GM13976 (cell line): ENCODE measurements at regions of chr12 and their contacts with region 1.

Region 1: DNA sequence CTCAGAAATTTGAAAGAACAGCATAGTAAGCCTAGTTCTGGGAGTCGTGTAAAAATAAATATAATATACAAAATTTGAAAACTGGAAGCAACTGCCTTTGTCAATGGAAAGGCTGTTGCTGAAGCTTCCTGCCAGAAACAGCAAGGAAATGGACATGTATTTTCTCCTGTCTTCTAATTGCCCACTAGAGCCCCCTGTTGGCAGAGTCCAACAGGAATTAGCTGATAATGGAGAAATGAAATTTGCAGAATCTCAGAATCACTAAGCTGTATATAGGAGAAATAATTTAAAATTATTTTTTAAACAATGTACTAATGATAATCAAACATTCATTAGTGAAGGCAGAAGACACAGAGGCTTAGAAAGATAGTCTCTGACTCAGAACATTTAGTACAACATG is 414.8 kb downstream of the SLC6A15 start:
- DNase-seq: no peak
- CTCF ChIP-seq: peak; percentile 24

Region 2: DNA sequence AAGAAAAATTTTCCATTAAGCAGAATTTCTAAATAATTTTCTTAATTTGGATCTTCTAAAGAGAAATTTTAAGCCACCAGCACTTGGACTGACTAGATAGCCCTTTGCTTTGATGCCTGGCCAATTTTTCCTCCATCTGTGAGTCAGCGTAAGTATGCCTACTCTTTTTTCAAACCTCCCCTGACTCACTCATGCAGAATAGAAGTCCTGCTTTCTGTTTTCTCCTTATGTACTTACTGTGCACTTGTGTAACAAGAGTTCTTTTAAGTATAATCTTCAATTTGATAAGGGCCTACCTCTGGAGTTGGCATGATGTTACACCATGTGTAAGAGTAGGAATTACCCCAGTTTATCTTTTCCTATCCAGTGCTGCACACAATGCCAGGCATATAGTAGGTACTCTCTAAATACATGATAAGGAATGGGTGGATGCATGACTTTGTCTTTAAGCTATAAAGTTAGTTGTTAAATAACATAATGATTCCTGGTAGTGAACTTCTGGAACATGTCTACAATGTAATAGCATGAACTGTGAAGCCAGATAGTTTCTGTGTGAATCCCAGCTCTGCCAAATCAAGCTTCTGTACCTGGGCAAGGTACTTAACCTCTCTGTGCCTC is 1481.5 kb before region 1 on chr12:
- in situ Hi-C with region 1: loop called (anchors 25 kb)
- DNase-seq: no peak
- CTCF ChIP-seq: no peak

Region 3: GRCh38 chr12:84305144-84305543 is 192.7 kb before region 1 on chr12:
- in situ Hi-C with region 1: no loop called
- DNase-seq: no peak
- CTCF ChIP-seq: no peak